Left cardiac atrium (tissue), 4 donors: ENCODE measurements at regions of chr20 and their contacts with region 1.

Region 1: DNA sequence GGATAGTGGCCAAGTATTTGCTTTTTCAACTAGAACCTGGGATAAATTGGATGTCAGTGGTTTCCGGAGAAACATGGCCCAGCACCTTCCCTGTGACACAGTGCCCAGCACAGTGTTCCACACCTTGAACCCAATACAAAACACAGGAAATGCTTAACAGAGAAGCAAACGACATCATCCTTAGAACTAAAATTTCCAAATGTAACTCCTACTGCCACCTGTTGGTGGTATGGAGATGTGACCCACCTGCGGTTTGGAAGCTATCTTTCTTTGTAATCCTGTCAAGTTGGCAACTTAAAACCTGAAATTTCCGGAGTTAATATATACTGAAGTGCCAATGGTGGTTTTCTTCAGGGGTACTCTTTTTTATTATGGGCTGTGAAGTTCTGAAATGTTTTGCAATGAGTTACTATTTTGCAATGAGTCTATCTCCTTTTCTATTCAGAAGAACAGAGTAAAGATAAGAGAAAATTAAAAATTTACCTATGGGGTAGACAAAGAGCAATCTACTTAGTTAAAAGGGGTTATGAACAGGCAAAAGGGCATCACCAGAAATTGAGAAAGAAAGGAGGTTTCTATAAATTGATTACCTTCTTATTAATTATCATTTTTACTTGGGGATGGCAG is 658.8 kb downstream of the PTPRT start:
- DNase-seq: no peak
- ATAC-seq: peak in 1 of 2 donors; percentile 48

Region 2: GRCh38 chr20:41738604-41739206 is 792.2 kb before region 1 on chr20:
- intact Hi-C with region 1: loop called in 1 of 2 experiments (anchors 10 kb)
- DNase-seq: peak; percentile 44
- ATAC-seq: peak; percentile 53 to 81

Region 3: GRCh38 chr20:41951615-41952014 is 579.3 kb before region 1 on chr20:
- intact Hi-C with region 1: loop called in 1 of 2 experiments (anchors 5 kb)
- DNase-seq: no peak
- ATAC-seq: no peak

Region 4: DNA sequence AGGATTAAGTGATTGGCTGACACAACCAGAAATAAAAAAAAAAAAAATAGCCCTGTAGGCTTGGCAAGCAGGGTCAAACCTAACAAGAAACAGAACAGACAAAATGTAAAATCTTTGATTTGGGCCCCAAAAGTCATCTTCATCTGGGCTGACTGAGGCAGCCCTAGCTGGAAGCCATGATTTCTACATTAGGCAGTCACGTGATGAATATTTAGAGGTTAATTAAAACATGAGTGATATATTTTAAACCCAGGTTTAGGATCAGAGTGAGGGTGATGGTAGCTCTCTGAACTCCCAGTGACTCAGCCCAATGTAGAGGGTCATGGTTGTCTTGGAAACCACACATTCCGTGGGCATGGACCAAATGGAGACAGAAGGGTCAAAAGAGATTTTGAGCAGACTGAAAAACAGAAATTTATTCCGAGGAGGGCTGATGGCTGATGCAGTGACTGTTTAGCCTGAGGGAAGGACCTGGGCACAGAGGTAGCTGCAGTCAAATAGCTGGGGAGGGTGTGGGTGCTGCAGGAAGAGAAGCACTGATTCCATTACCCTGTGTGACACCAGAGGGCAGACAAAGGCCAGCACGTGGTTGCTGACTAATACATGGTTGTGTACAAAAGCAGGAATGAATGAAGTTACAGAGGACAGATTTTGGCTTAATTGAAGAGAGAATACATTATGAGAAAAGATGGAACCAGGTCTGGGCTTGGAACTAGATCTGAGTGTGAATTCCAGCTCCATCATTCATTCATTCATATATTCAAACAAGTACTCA is 339.6 kb before region 1 on chr20:
- intact Hi-C with region 1: loop called in 1 of 2 experiments (anchors 10 kb)
- DNase-seq: no peak
- ATAC-seq: peak in 1 of 2 donors; percentile 47

Region 5: DNA sequence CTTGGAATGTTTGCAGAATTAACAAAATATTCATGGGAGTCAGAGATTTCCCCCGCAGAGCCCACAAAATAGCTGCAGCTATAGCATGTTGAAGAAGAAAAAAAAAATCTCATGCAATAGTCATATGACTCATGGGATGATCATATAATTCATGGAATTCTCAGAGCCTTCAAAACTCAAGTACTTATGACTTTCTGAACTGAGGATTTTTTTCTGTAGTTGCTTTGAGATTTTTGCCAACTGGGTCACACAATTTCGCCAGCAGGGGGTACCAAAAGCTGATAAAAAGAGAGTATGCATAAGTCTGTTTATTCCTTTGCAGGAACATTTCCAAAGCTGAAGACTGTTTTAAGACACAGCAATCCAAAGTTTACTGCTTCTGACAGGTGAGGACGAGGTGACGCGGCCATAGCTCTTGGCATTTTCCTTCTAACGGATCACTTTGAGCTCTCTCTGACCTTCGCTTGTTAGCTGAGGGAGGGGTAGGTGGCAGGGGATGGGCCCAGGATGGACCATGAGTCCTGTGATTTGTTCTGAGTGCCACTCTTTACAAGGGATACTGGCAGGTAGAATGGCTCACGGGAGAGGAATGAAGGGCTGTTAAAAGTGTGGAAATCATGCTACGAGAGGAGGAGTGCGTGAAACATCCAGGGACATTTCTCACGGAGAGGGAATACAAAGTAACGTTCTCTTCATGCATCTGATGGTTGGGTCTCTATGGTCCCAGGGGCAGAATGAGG is 326.6 kb before region 1 on chr20:
- intact Hi-C with region 1: loop called (anchors 10 kb)
- DNase-seq: no peak
- ATAC-seq: peak in 1 of 2 donors; percentile 45

Region 6: GRCh38 chr20:42795111-42795695 is 264.3 kb after region 1 on chr20:
- intact Hi-C with region 1: no loop called
- DNase-seq: no peak
- ATAC-seq: no peak